Esophagus muscularis mucosa (tissue), 4 donors: ENCODE measurements at regions of chr6 and their contacts with region 1.

Region 1: GRCh38 chr6:107489636-107490565 is at the start of gene SOBP:
- DNase-seq: no peak
- H3K4me3 ChIP-seq: peak within 1 kb of the TSS; percentile 76 to 87 (median 80)
- H3K27ac ChIP-seq: peak within 1 kb of the TSS; percentile 87 to 92 (median 90)
- H3K4me1 ChIP-seq: peaks cover 34 to 59% (median 57%) of the 10 kb centered on the region in 4 donors
- H3K27me3 ChIP-seq: peaks cover 0 to 4% (median 0%) of the 10 kb centered on the region in 4 donors
- CTCF ChIP-seq: peak in 2 of 3 experiments; percentile 23 to 28
- EP300 ChIP-seq: no peak
- POLR2A ChIP-seq: no peak
- total RNA-seq, gene SOBP: 18.6 to 44.1 (median 27.6) TPM

Region 2: GRCh38 chr6:107532706-107533105 is 42.8 kb after region 1 on chr6:
- intact Hi-C with region 1: loop called (anchors 5 kb)
- DNase-seq: no peak
- H3K4me3 ChIP-seq: no peak overlapping the region
- H3K27ac ChIP-seq: peak overlapping the region; percentile 20 to 48 (median 32)
- H3K4me1 ChIP-seq: peaks cover 6 to 83% (median 50%) of the 10 kb centered on the region in 4 donors
- H3K27me3 ChIP-seq: no peaks in the 10 kb centered on the region
- CTCF ChIP-seq: no peak
- EP300 ChIP-seq: no peak
- POLR2A ChIP-seq: no peak

Region 3: DNA sequence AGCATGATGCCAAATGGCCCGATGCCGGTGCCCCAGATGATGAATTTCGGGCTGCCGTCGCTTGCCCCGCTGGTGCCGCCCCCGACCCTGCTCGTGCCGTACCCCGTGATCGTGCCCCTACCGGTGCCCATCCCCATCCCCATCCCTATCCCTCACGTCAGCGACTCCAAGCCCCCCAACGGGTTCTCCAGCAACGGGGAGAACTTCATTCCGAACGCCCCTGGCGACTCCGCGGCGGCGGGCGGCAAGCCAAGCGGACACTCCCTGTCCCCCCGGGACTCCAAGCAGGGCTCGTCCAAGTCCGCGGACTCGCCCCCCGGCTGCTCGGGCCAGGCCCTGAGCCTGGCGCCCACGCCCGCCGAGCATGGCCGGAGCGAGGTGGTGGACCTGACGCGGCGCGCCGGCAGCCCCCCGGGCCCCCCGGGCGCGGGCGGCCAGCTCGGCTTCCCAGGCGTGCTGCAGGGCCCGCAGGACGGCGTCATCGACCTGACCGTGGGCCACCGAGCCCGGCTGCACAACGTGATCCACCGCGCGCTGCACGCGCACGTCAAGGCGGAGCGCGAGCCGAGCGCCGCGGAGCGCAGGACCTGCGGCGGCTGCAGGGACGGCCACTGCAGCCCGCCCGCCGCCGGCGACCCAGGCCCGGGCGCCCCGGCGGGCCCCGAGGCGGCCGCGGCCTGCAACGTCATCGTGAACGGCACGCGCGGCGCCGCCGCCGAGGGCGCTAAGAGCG is 144.6 kb after region 1 on chr6:
- intact Hi-C with region 1: loop called (anchors 10 kb)
- DNase-seq: no peak
- H3K4me3 ChIP-seq: peak overlapping the region; percentile 32 to 51 (median 38)
- H3K27ac ChIP-seq: no peak overlapping the region
- H3K4me1 ChIP-seq: peaks cover 0 to 29% (median 20%) of the 10 kb centered on the region in 4 donors
- H3K27me3 ChIP-seq: peaks cover 0 to 12% (median 0%) of the 10 kb centered on the region in 4 donors
- CTCF ChIP-seq: no peak
- EP300 ChIP-seq: no peak
- POLR2A ChIP-seq: no peak

Region 4: GRCh38 chr6:107668743-107669474 is 179.0 kb after region 1 on chr6:
- intact Hi-C with region 1: loop called (anchors 10 kb)
- DNase-seq: no peak
- H3K4me3 ChIP-seq: no peak overlapping the region
- H3K27ac ChIP-seq: no peak overlapping the region
- H3K4me1 ChIP-seq: peaks cover 7 to 11% (median 9%) of the 10 kb centered on the region in 4 donors
- H3K27me3 ChIP-seq: no peaks in the 10 kb centered on the region
- CTCF ChIP-seq: no peak
- EP300 ChIP-seq: no peak
- POLR2A ChIP-seq: no peak